ENCODE measurements at regions of chr2 and their contacts with region 1.

Region 1: GRCh38 chr2:226799181-226799975 is at the start of gene IRS1:
- DNase-seq: peak; percentile 44 to 73 (median 52)
- H3K4me3 ChIP-seq: peak within 1 kb of the TSS; percentile 66
- H3K4me3 Mint-ChIP-seq: peak within 1 kb of the TSS; percentile 86 to 96 (median 90)
- H3K27ac ChIP-seq: no peak within 1 kb of the TSS
- H3K27ac Mint-ChIP-seq: peak within 1 kb of the TSS in 7 of 8 donors; percentile 36 to 81 (median 70)
- H3K4me1 ChIP-seq: peaks cover 15% of the 10 kb centered on the region
- H3K4me1 Mint-ChIP-seq: peaks cover 16 to 30% (median 22%) of the 10 kb centered on the region in 3 donors
- H3K27me3 ChIP-seq: no peaks in the 10 kb centered on the region
- H3K27me3 Mint-ChIP-seq: peaks cover 6 to 7% of the 10 kb centered on the region in 2 donors
- total RNA-seq, gene IRS1: 3.6 to 3.9 TPM

Region 2: DNA sequence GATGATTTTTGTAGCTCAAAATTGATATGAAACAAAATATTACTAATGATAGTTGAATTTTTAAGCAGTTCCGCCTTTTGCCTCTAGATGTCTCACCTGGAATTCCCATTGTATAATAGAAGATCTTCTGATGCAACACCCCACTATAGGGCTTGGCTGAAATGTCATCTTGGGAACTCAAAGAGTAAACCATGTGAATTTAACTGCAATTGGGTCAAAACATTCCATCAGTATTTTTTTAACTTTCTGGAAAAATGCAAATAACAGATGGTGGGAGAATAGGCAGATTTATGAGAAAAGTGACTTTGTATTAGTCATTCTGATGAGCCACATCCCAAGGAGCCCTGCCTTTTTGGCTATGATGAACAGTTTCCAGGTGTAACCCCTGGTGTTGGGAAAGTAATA is 909.9 kb before region 1 on chr2:
- CTCF ChIA-PET with region 1: interaction called, 18 read pairs
- POLR2A ChIA-PET with region 1: no interaction called
- DNase-seq: peak in 1 of 5 donors; percentile 1
- H3K4me3 ChIP-seq: no peak overlapping the region
- H3K4me3 Mint-ChIP-seq: no peak overlapping the region
- H3K27ac ChIP-seq: no peak overlapping the region
- H3K27ac Mint-ChIP-seq: no peak overlapping the region
- H3K4me1 ChIP-seq: no peaks in the 10 kb centered on the region
- H3K4me1 Mint-ChIP-seq: no peaks in the 10 kb centered on the region
- H3K27me3 ChIP-seq: no peaks in the 10 kb centered on the region
- H3K27me3 Mint-ChIP-seq: no peaks in the 10 kb centered on the region

Region 3: GRCh38 chr2:226835796-226836547 is 36.6 kb after region 1 on chr2 and contains the start of gene RHBDD1:
- CTCF ChIA-PET with region 1: interaction called, 10 read pairs
- POLR2A ChIA-PET with region 1: interaction called, 33 read pairs
- DNase-seq: peak; percentile 89 to 97 (median 93)
- H3K4me3 ChIP-seq: peak within 1 kb of the TSS; percentile 85
- H3K4me3 Mint-ChIP-seq: peak within 1 kb of the TSS; percentile 86 to 98 (median 94)
- H3K27ac ChIP-seq: peak within 1 kb of the TSS; percentile 99
- H3K27ac Mint-ChIP-seq: peak within 1 kb of the TSS; percentile 96 to 100 (median 99)
- H3K4me1 ChIP-seq: peaks cover 52% of the 10 kb centered on the region
- H3K4me1 Mint-ChIP-seq: peaks cover 56 to 67% (median 67%) of the 10 kb centered on the region in 3 donors
- H3K27me3 ChIP-seq: no peaks in the 10 kb centered on the region
- H3K27me3 Mint-ChIP-seq: peaks cover 0 to 2% of the 10 kb centered on the region in 2 donors
- total RNA-seq, gene RHBDD1: 32.8 to 35.7 TPM

Region 4: DNA sequence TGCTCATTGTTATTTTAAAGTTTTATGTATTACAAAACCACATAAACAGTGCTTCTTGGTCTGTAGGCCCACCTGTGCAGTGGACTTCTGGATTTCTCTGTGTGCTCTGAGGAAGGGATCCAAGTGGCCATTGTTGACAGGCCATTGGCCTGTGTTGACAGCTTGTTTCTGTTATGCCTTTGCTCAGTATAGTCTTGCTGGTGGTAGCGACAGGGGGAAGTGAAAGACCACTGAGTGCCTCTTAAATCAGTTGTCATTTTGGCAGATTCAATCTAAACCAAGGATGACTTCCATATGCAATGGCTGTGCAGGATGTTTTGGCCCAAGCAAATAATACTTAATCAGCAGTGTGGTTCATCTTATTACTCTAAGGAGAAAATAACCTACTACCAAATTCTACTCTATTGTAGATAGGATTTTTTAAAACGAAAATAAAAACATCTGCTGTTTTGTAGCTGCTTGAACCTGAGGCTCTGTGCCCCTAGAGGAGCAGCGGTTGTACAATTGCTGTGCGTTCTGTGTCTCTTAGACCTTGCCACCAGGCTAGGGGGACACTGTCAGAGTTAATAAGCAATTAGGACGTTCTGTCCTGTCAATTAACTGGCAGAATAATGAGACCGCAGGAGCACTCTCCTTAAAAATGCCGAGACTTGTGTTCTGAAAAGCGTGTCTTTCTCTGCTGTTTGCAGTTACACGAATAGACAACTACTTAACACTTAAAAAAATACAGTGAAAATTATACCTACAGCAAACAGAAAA is 144.7 kb after region 1 on chr2:
- CTCF ChIA-PET with region 1: no interaction called
- POLR2A ChIA-PET with region 1: no interaction called
- DNase-seq: no peak
- H3K4me3 ChIP-seq: no peak overlapping the region
- H3K4me3 Mint-ChIP-seq: no peak overlapping the region
- H3K27ac ChIP-seq: no peak overlapping the region
- H3K27ac Mint-ChIP-seq: peak overlapping the region in 1 of 8 donors; percentile 38
- H3K4me1 ChIP-seq: no peaks in the 10 kb centered on the region
- H3K4me1 Mint-ChIP-seq: no peaks in the 10 kb centered on the region
- H3K27me3 ChIP-seq: no peaks in the 10 kb centered on the region
- H3K27me3 Mint-ChIP-seq: no peaks in the 10 kb centered on the region